Activated CD4-positive, alpha-beta T cell treated with anti-CD3 and anti-CD28 coated beads, Interleukin-2, amount 10 ng/mL, durations not matched to agents 24 days and 14 days (primary cell): ENCODE measurements at regions of chr5 and their contacts with region 1.

Region 1: GRCh38 chr5:151252762-151253604 is at the start of gene GM2A:
- DNase-seq: peak; percentile 100
- H3K4me3 Mint-ChIP-seq: peak within 1 kb of the TSS; percentile 89
- H3K27ac Mint-ChIP-seq: peak within 1 kb of the TSS; percentile 95
- H3K4me1 Mint-ChIP-seq: peaks cover 30% of the 10 kb centered on the region
- H3K27me3 Mint-ChIP-seq: no peaks in the 10 kb centered on the region
- total RNA-seq, gene GM2A: 15.4 and 16.0 TPM in 2 replicates

Region 2: DNA sequence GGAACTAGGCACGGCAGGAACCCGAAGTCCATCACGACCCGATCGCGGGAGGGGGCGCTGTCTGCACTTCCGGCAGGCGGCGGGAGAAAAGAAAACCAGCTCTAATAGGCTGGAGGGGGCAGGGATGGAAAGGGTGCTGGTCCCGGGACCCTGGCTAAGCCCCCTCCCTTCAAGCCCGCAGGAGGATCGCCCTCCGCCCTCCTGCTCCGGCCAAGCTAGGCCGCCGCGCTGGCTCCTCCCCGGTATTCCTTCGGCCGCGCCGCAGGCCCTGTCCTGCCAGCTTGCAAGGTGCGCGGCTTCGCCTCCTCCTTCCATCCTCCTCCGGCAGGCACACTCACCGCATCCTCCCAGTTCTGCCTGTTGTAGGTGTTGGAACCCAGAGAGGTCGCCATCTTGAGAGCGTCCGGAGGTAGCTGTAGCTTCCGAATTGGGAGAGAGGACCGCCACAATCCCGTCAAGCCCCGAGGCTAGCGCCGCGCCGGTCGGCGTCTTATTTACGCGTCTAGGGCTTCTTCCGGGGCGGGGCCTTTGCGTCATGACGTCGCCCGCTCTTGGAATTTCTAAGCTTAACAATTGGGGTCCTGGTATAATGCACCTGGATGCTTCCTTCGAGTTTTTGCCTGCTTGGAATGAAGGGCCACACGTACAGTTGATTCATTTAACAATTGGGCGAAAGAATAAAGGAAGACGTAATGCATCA is 552.2 kb before region 1 on chr5 and contains the start of gene RBM22:
- intact Hi-C with region 1: loop called (anchors 5 kb)
- DNase-seq: peak; percentile 98
- H3K4me3 Mint-ChIP-seq: peak within 1 kb of the TSS; percentile 53
- H3K27ac Mint-ChIP-seq: no peak within 1 kb of the TSS
- H3K4me1 Mint-ChIP-seq: peaks cover 12% of the 10 kb centered on the region
- H3K27me3 Mint-ChIP-seq: no peaks in the 10 kb centered on the region
- total RNA-seq, gene RBM22: 69.6 and 78.4 TPM in 2 replicates

Region 3: DNA sequence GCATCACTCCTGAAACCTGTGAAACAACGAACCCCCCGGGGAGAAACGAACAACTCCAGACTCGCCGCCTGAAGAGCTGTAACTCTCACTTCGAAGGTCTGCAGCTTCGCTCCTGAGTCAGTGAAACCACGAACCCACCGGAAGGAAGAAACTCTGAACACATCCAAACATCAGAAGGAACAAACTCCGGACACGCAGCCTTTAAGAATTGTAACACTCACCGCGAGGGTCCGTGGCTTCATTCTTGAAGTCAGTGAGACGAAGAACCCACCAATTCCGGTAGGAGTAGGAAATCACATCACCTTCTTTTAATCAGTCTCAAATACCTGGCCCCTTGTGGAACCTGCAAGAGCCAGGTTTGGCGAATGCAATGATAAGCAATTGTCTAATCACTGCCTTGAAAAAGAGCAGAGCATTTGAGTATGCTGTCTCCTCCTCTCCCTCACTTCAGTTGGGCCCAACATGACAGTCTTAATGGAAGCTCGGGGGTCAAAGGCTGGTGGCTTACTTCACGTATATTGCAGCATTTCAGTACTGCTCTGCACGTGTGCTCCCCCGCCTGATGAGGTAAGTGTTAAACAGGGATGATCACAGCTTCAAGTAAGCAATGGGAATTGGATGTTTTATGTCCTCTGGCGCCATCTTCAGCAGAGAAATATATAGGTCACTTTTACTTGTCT is 406.2 kb before region 1 on chr5:
- intact Hi-C with region 1: loop called (anchors 2 kb)
- DNase-seq: peak; percentile 90
- H3K4me3 Mint-ChIP-seq: peak overlapping the region; percentile 80
- H3K27ac Mint-ChIP-seq: peak overlapping the region; percentile 85
- H3K4me1 Mint-ChIP-seq: peaks cover 30% of the 10 kb centered on the region
- H3K27me3 Mint-ChIP-seq: peaks cover 3% of the 10 kb centered on the region

Region 4: DNA sequence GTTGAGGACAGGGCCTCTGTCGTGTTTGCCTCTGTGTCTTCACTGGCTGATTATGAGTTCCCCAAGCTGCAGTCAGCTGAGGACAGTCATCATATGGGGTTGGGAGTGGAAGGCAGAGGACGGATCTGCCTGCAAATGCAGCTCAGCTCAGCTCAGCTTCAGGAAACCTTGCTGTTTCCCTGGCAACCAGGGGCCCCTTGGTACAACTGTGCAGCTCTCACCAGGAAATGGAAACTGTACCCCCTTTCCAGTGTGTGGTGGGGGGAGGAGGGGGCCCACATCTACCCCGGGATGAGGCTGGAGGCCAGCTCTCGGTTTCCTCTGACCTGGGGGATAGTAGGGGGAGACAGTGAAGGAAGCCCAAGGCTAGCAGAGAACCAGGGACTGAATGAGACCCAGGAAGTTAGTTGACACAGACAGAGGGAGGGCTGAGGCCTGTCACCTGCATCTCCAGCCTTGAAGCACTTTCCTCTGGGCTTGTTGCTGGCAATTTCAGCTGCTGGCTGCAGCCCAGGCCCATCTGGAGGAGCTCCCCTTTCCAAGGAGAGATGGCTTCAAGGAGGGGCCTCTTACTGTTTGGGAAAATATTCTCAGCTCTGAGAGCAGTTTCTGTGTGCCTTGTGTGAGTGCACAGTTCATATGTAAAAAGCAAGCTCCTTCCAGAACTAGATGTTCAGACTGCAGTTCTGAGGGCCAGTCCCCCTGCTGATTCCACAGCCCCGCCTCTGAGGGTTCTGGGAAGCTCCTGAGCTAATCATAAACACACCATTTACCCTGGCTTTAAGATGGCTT is 102.3 kb before region 1 on chr5:
- intact Hi-C with region 1: loop called (anchors 2 kb)
- DNase-seq: peak; percentile 93
- H3K4me3 Mint-ChIP-seq: peak overlapping the region; percentile 66
- H3K27ac Mint-ChIP-seq: peak overlapping the region; percentile 88
- H3K4me1 Mint-ChIP-seq: peaks cover 81% of the 10 kb centered on the region
- H3K27me3 Mint-ChIP-seq: no peaks in the 10 kb centered on the region

Region 5: GRCh38 chr5:151223469-151224264 is 29.3 kb before region 1 on chr5 and contains the start of gene CCDC69:
- intact Hi-C with region 1: loop called (anchors 1 kb)
- DNase-seq: peak; percentile 88
- H3K4me3 Mint-ChIP-seq: peak within 1 kb of the TSS; percentile 84
- H3K27ac Mint-ChIP-seq: peak within 1 kb of the TSS; percentile 83
- H3K4me1 Mint-ChIP-seq: peaks cover 51% of the 10 kb centered on the region
- H3K27me3 Mint-ChIP-seq: no peaks in the 10 kb centered on the region
- total RNA-seq, gene CCDC69: 22.7 and 23.2 TPM in 2 replicates

Region 6: DNA sequence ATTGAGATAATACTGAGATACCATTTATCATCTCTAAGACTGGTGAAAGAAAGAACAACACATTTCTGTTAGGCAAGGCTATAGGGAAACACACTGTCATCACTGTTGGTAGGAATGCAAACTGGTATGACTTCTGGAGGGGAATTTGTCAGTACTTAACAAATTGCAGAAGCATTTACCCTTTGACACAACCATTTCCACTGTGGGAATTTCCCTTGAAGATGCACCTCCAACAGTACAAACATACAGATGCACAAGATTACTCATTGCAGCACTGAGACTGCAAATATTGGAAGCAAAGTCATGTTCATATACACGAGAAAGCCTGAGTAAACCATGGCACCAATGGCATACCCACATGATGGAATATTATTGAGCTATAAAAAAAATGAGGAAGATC is 17.6 kb after region 1 on chr5:
- intact Hi-C with region 1: loop called (anchors 1 kb)
- DNase-seq: peak; percentile 65
- H3K4me3 Mint-ChIP-seq: no peak overlapping the region
- H3K27ac Mint-ChIP-seq: no peak overlapping the region
- H3K4me1 Mint-ChIP-seq: no peaks in the 10 kb centered on the region
- H3K27me3 Mint-ChIP-seq: no peaks in the 10 kb centered on the region

Region 7: GRCh38 chr5:151298063-151298855 is 45.3 kb after region 1 on chr5:
- intact Hi-C with region 1: no loop called
- DNase-seq: peak; percentile 73
- H3K4me3 Mint-ChIP-seq: no peak overlapping the region
- H3K27ac Mint-ChIP-seq: no peak overlapping the region
- H3K4me1 Mint-ChIP-seq: peaks cover 7% of the 10 kb centered on the region
- H3K27me3 Mint-ChIP-seq: peaks cover 25% of the 10 kb centered on the region